ENCODE measurements at regions of chr1 and their contacts with region 1.

Region 1: GRCh38 chr1:241499910-241500309 is 19.6 kb downstream of the FH start:
- DNase-seq: no peak
- H3K4me3 ChIP-seq: no peak overlapping the region
- H3K27ac ChIP-seq: no peak overlapping the region
- H3K4me1 ChIP-seq: no peaks in the 10 kb centered on the region
- H3K27me3 ChIP-seq: no peaks in the 10 kb centered on the region
- CTCF ChIP-seq: peak; percentile 68

Region 2: DNA sequence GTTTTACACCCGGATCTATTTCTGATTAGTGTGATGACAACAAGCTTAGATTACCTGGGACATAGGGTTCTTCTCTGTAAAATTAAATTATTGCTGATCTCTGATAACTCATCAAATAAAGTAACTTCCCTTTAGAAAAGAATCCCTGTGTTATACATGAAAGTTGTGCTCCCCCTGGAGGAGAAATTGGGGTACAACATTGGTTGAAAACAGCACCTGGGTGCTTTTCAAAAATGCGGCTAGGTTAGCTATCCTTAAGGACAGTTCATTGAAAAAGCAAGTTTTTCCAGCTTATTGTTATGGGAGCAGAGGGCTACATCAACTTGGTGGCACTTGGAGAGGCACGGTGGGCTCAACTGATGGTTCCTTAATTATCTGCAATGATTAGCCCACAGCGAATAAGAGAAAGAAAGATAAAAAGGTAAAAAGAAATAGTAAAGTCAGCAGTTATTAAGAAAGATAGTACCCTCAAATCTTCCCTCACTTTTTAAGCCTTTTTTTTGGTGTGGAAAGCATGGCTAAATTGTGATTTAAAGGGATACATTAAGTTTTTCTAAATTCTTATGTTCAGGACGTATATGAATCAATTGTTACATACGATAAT is 1310.4 kb before region 1 on chr1:
- CTCF ChIA-PET with region 1: no interaction called
- POLR2A ChIA-PET with region 1: no interaction called
- intact Hi-C with region 1: loop called (anchors 5 kb)
- DNase-seq: peak in 1 of 2 experiments; percentile 18
- H3K4me3 ChIP-seq: no peak overlapping the region
- H3K27ac ChIP-seq: no peak overlapping the region
- H3K4me1 ChIP-seq: no peaks in the 10 kb centered on the region
- H3K27me3 ChIP-seq: peaks cover 23% of the 10 kb centered on the region
- CTCF ChIP-seq: peak; percentile 78

Region 3: GRCh38 chr1:240888039-240888786 is 611.7 kb before region 1 on chr1:
- CTCF ChIA-PET with region 1: no interaction called
- POLR2A ChIA-PET with region 1: no interaction called
- intact Hi-C with region 1: loop called (anchors 2 kb)
- DNase-seq: peak in 1 of 2 experiments; percentile 47
- H3K4me3 ChIP-seq: no peak overlapping the region
- H3K27ac ChIP-seq: no peak overlapping the region
- H3K4me1 ChIP-seq: no peaks in the 10 kb centered on the region
- H3K27me3 ChIP-seq: no peaks in the 10 kb centered on the region
- CTCF ChIP-seq: peak; percentile 92

Region 4: GRCh38 chr1:241356519-241357365 is 143.2 kb before region 1 on chr1 and contains the start of gene RGS7:
- CTCF ChIA-PET with region 1: interaction called, 10 read pairs
- POLR2A ChIA-PET with region 1: no interaction called
- intact Hi-C with region 1: no loop called
- DNase-seq: no peak
- H3K4me3 ChIP-seq: no peak within 1 kb of the TSS
- H3K27ac ChIP-seq: no peak within 1 kb of the TSS
- H3K4me1 ChIP-seq: no peaks in the 10 kb centered on the region
- H3K27me3 ChIP-seq: no peaks in the 10 kb centered on the region
- CTCF ChIP-seq: no peak
- total RNA-seq, gene RGS7: 2.0 and 5.8 TPM in 2 replicates

Region 5: DNA sequence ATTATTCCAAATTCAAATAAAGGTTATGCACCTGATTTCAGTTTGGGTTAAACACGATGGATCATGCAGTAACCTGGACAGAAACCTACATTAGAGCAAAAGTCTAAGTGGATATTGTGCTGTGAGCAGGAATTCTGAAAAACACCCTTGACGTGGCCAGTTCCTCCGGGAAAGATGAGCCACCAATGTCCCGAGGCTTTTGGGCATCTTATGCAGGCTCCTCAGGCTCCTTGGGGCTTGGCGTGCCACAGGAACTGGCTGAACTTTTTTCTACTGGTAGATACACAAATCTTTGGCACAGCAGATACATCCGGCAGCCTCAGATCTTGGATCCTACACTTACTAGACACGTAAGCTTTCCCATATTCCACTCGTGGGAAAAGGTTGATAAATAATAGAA is 66.7 kb after region 1 on chr1:
- CTCF ChIA-PET with region 1: no interaction called
- POLR2A ChIA-PET with region 1: no interaction called
- intact Hi-C with region 1: no loop called
- DNase-seq: no peak
- H3K4me3 ChIP-seq: no peak overlapping the region
- H3K27ac ChIP-seq: no peak overlapping the region
- H3K4me1 ChIP-seq: no peaks in the 10 kb centered on the region
- H3K27me3 ChIP-seq: no peaks in the 10 kb centered on the region
- CTCF ChIP-seq: no peak